Mammary epithelial cell (primary cell): ENCODE measurements at regions of chr11 and their contacts with region 1.

Region 1: GRCh38 chr11:123246749-123247495 is 51.9 kb upstream of the CLMP start:
- DNase-seq: peak; percentile 59
- H3K4me3 ChIP-seq: no peak overlapping the region
- H3K27ac ChIP-seq: no peak overlapping the region
- H3K4me1 ChIP-seq: peaks cover 3% of the 10 kb centered on the region
- H3K27me3 ChIP-seq: no peaks in the 10 kb centered on the region
- CTCF ChIP-seq: peak; percentile 92 to 99

Region 2: DNA sequence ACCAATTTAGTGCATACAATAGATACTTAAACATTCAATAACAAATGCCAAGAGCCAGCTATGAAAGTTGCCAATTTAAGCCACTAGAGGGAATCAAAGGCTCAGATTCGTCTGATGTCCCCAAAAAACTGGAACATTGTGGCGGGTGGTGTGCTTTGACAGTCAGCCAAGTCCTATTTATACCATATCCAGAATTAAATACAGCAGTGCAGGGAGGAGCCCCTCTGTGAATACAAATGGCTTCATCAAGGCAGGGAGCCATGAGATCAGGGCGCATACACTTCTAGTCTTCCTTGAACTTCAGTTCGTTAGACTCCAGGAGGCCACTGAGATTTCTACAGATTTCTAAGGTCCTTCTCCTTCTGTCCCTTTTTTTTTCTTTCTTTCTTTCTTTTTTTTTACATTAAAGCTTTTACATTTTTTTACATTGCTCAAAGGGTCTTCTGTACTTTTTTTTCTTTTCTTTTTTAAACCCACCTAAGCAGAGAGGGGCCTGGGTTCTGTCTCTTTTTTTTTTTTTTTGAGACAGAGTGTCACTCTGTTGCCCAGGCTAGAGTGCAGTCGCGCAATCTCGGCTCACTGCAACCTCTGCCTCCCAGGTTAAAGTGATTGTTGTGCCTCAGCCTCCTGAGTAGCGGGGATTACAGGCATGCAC is 143.5 kb before region 1 on chr11:
- CTCF ChIA-PET with region 1: interaction called, 19 read pairs
- dilution Hi-C with region 1: no loop called
- in situ Hi-C with region 1: loop called in 1 of 2 experiments (anchors 5 kb)
- intact Hi-C with region 1: loop called (anchors 2 kb)
- DNase-seq: peak; percentile 27
- H3K4me3 ChIP-seq: no peak overlapping the region
- H3K27ac ChIP-seq: no peak overlapping the region
- H3K4me1 ChIP-seq: peaks cover 5% of the 10 kb centered on the region
- H3K27me3 ChIP-seq: no peaks in the 10 kb centered on the region
- CTCF ChIP-seq: peak; percentile 42 to 70

Region 3: DNA sequence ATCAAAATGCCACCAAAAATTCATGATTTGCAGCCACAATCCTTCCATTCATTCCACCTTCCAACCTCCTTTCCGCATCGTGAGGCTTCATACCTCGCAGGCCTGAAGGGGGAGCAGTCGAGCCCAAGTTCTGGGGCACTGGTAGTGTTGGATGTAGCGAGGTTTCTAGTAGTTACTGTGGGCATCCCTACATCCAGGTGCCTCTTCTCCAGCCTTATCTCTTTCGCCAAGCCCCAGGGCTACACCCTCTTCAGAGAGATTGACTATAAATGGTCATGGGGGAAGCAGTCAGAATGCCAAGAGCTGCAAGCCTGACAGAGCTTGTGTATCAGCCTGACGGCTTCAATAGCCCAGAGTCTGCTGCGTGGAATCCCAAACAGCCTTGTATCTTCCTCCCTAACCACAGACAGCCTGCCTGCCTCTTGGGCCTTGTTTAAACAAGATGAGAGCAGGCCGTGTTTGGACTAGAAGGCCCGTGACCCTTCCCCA is 80.8 kb before region 1 on chr11:
- CTCF ChIA-PET with region 1: interaction called, 9 read pairs
- dilution Hi-C with region 1: loop called (anchors 5 kb)
- in situ Hi-C with region 1: loop called in 1 of 2 experiments (anchors 10 kb)
- intact Hi-C with region 1: loop called (anchors 1 kb)
- DNase-seq: peak; percentile 66
- H3K4me3 ChIP-seq: no peak overlapping the region
- H3K27ac ChIP-seq: peak overlapping the region; percentile 45
- H3K4me1 ChIP-seq: peaks cover 15% of the 10 kb centered on the region
- H3K27me3 ChIP-seq: no peaks in the 10 kb centered on the region
- CTCF ChIP-seq: peak; percentile 87 to 88

Region 4: DNA sequence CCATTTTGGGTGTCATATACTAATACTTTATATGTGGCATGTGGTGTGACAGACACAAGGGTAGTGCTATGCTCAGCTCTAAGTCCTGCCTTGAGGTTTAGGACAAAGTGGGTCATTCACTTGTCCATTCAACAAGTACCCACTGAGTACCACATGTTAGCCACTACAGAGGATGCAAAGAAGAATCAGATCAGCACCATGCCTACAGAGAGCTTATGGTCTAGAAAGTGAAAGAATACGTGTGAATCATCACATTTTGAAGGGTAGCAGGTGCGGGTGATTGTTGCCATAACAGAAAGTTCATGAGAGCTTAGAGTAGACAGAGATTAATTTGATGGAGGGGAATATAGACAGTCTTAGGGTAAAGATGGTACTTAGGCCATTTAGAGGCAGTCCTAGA is 70.1 kb before region 1 on chr11:
- CTCF ChIA-PET with region 1: no interaction called
- dilution Hi-C with region 1: no loop called
- in situ Hi-C with region 1: no loop called
- intact Hi-C with region 1: no loop called
- DNase-seq: no peak
- H3K4me3 ChIP-seq: no peak overlapping the region
- H3K27ac ChIP-seq: no peak overlapping the region
- H3K4me1 ChIP-seq: peaks cover 51% of the 10 kb centered on the region
- H3K27me3 ChIP-seq: no peaks in the 10 kb centered on the region
- CTCF ChIP-seq: no peak

Region 5: GRCh38 chr11:123188508-123189165 is 58.3 kb before region 1 on chr11:
- CTCF ChIA-PET with region 1: interaction called, 3 read pairs
- dilution Hi-C with region 1: no loop called
- in situ Hi-C with region 1: no loop called
- intact Hi-C with region 1: loop called (anchors 2 kb)
- DNase-seq: peak; percentile 68
- H3K4me3 ChIP-seq: peak overlapping the region; percentile 2 to 24 (median 5)
- H3K27ac ChIP-seq: peak overlapping the region; percentile 57
- H3K4me1 ChIP-seq: peaks cover 74% of the 10 kb centered on the region
- H3K27me3 ChIP-seq: no peaks in the 10 kb centered on the region
- CTCF ChIP-seq: no peak

Region 6: DNA sequence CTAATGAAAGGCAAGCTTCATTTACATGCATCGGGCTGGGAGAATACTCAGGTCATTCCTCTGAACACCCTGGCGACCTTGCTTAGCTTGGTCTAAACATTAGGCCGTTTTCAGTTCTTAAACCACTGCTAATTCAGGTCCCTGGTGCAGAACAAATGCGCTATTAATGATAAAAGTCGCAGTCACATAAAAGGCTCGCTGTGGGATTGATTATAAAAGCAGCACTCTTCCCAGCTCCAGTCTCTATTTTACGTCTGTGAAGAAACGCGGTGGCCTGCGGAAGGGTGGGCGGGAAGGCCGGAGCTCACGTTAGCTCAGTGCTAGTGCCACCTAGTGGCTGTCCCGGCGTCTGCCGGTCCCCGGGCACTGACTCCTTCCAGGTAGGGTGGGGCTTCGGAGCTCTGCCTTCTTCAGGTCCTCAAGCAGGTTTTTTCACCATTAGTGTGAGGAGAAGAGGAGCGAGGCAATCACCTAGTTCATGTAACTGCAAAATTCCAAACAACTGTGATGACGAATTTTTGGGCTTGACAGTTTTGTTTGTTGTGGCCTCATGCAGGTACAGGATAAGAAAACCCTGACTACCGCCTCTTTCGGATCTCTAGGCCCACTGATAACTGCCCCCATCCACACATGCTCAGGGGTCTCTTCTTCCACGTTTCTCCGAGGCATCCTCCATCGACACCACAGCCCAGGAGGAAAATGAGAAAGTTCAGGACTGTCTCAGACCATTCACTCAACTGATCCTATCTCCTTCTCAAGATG is 14.6 kb after region 1 on chr11:
- CTCF ChIA-PET with region 1: interaction called, 14 read pairs
- dilution Hi-C with region 1: no loop called
- in situ Hi-C with region 1: no loop called
- intact Hi-C with region 1: no loop called
- DNase-seq: peak; percentile 71
- H3K4me3 ChIP-seq: no peak overlapping the region
- H3K27ac ChIP-seq: no peak overlapping the region
- H3K4me1 ChIP-seq: peaks cover 6% of the 10 kb centered on the region
- H3K27me3 ChIP-seq: no peaks in the 10 kb centered on the region
- CTCF ChIP-seq: peak; percentile 89

Region 7: DNA sequence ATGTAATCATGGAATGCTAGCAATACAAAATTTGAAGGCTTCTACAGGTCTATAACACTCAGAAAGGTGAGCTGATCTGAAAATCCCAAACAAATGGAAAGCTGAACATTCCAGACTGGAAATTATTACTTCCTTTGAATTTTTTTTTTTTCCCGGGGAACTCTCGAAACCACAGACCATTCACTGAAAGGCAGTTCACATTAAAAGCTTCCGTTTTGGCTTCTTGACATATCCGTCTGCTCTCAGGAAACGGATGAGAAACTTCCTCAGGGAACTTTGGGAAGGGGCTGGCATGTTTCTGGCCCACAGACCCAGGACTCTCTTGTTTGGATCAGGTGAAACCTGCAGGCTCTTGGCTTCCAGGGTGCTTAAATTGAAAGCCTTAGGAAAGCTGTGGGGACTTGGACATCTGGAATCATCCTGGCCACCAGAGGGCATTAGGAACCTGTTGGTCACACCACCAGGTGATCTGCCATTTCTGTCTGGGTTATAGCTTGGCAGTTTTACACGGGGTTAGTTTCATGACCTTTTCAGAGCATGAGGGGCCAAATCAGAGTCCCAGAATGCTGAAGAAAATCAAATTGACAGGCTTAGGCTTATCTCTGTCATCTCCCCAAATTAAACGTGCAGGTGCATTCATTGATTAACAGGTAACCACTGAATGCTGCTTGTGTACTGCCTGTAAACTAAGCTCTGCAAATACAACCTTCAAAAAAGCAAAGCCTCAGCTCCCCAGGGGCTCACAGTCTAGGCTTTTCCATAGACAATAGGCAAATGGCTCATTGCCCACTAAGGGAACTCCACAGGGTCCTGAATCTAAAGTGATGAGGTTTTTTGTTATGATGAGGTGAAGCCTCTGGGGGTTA is 160.4 kb after region 1 on chr11:
- CTCF ChIA-PET with region 1: no interaction called
- dilution Hi-C with region 1: no loop called
- in situ Hi-C with region 1: no loop called
- intact Hi-C with region 1: no loop called
- DNase-seq: peak; percentile 41
- H3K4me3 ChIP-seq: no peak overlapping the region
- H3K27ac ChIP-seq: no peak overlapping the region
- H3K4me1 ChIP-seq: no peaks in the 10 kb centered on the region
- H3K27me3 ChIP-seq: peaks cover 7% of the 10 kb centered on the region
- CTCF ChIP-seq: peak; percentile 84 to 87